GM12878 (cell line): ENCODE measurements at regions of chr4 and their contacts with region 1.

Region 1: GRCh38 chr4:77065382-77065781 is 10.4 kb downstream of the CCNI start:
- DNase-seq: no peak
- ATAC-seq: no peak
- H3K4me3 ChIP-seq: no peak overlapping the region
- H3K27ac ChIP-seq: no peak overlapping the region
- H3K4me1 ChIP-seq: no peaks in the 10 kb centered on the region; the same call in 1 of the 2 replicates
- H3K27me3 ChIP-seq: no peaks in the 10 kb centered on the region
- CTCF ChIP-seq: no peak
- EP300 ChIP-seq: no peak
- POLR2A ChIP-seq: no peak
- RAD21 ChIP-seq: no peak

Region 2: GRCh38 chr4:77075869-77076799 is 10.8 kb after region 1 on chr4 and contains the start of gene CCNI:
- CTCF ChIA-PET with region 1: no interaction called
- POLR2A ChIA-PET with region 1: interaction called, 10 read pairs
- RAD21 ChIA-PET with region 1: no interaction called
- SMC1A ChIA-PET with region 1: interaction called, 3 read pairs
- in situ Hi-C with region 1: no loop called
- intact Hi-C with region 1: no loop called
- DNase-seq: peak; percentile 92
- ATAC-seq: peak; percentile 77
- H3K4me3 ChIP-seq: peak within 1 kb of the TSS; percentile 97
- H3K27ac ChIP-seq: peak within 1 kb of the TSS; percentile 100
- H3K4me1 ChIP-seq: 0 out of 2 replicates have a peak, but pooled peaks cover 3% of the 10 kb centered on the region
- H3K27me3 ChIP-seq: no peaks in the 10 kb centered on the region
- CTCF ChIP-seq: no peak
- EP300 ChIP-seq: peak; percentile 4 to 78; a peak in 3 of 4 replicates
- POLR2A ChIP-seq: peak; percentile 82
- RAD21 ChIP-seq: no peak
- polyA plus RNA-seq, gene CCNI: 72.4 to 82.4 TPM